ENCODE measurements at regions of chr3 and their contacts with region 1.

Region 1: GRCh38 chr3:32502118-32502945 is at the start of gene CMTM6:
- DNase-seq: peak; percentile 87
- ATAC-seq: peak; percentile 80
- H3K4me3 Mint-ChIP-seq: peak within 1 kb of the TSS; percentile 86
- H3K27ac Mint-ChIP-seq: peak within 1 kb of the TSS; percentile 95
- H3K4me1 Mint-ChIP-seq: peaks cover 29% of the 10 kb centered on the region
- H3K27me3 Mint-ChIP-seq: no peaks in the 10 kb centered on the region
- total RNA-seq, gene CMTM6: 33.6 to 48.0 TPM

Region 2: DNA sequence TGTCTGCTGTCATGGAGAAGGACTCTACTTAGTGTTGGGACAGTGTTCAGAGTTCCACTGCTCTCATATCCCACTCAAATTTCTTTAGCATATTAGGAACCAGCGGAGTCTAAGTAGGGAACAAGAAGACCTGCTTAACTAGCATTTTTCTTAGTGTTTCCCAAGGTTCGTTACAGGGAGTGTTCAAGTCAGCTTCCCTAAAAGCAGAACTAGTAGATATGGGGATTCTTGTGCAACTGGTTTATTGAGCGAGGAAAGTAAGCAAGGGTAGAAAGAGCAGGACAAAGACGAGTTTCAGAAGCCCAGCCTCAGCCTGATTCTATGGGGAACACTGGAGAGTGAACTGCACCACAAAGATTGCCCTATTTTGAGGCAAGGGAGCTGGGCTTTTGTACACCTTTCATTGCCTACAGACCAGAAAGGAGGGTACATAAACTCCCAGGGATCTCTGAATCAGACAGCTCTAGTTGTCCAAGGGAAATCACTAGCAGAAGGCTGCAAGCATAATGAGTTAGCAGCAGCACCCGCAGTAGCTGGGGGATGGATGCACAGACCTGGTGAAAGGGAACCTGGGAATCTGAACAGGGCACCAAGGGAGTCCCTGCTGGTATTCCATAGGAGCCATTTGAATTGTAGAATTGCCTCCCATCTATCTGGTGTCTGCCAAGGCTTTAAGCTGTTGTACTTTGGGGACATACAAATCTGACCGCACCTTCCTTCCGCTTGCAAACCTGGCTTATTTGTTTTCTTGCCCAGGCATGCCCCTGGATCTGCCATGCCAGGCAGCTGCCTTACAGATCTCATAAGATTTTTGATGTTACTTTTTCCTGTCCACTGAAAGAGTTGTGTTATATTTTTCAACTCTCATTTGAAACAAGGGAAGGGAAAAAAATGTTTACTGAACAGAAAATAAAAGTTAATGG is 95.6 kb before region 1 on chr3:
- CTCF ChIA-PET with region 1: no interaction called
- POLR2A ChIA-PET with region 1: no interaction called
- intact Hi-C with region 1: no loop called
- DNase-seq: no peak
- ATAC-seq: no peak
- H3K4me3 Mint-ChIP-seq: no peak overlapping the region
- H3K27ac Mint-ChIP-seq: peak overlapping the region; percentile 39
- H3K4me1 Mint-ChIP-seq: peaks cover 78% of the 10 kb centered on the region
- H3K27me3 Mint-ChIP-seq: no peaks in the 10 kb centered on the region

Region 3: DNA sequence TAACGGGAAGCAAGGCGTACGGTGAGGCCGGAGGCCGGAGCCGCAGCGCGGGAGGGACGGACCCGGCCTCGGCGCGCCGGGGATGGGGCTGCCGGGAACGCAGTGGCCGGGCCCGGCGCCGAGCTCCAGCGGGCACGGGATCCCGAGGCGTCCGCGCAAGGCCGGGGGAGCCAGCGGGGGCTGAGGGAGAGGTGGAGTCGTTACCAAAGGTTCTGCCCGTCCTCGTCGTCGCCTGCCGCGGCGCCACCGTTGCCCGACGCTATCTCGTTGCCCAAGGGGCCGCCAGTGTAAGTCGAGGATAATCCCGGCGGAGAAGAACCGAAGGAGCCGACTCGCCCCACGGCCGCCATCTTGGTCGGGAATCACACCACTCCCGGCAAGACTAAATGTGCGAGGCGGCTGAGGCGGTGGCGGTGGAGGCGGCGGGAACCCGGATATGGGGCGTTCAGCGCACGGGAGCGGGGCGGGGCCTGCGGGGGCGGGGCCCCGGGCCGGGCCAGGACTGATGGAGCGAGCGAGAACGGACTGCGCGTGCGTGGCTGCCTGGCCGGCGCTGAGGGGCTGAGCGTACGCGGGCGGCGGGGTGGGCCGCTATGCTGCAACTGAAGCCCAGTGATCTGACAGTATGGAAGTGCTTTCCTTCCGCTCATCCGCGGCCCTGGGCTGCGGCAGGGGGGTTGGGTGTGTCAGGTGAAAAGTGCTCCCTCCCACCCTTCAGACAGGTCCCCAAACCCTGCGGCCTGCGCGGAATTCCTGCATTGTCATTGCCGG is 68.3 kb after region 1 on chr3 and contains the start of gene DYNC1LI1:
- CTCF ChIA-PET with region 1: no interaction called
- POLR2A ChIA-PET with region 1: no interaction called
- intact Hi-C with region 1: loop called (anchors 1 to 2 kb)
- DNase-seq: peak; percentile 96
- ATAC-seq: peak; percentile 96
- H3K4me3 Mint-ChIP-seq: peak within 1 kb of the TSS; percentile 78
- H3K27ac Mint-ChIP-seq: peak within 1 kb of the TSS; percentile 90
- H3K4me1 Mint-ChIP-seq: peaks cover 28% of the 10 kb centered on the region
- H3K27me3 Mint-ChIP-seq: no peaks in the 10 kb centered on the region
- total RNA-seq, gene DYNC1LI1: 31.8 to 31.9 TPM